Naive thymus-derived CD4-positive, alpha-beta T cell (primary cell): ENCODE measurements at regions of chr6 and their contacts with region 1.

Region 1: DNA sequence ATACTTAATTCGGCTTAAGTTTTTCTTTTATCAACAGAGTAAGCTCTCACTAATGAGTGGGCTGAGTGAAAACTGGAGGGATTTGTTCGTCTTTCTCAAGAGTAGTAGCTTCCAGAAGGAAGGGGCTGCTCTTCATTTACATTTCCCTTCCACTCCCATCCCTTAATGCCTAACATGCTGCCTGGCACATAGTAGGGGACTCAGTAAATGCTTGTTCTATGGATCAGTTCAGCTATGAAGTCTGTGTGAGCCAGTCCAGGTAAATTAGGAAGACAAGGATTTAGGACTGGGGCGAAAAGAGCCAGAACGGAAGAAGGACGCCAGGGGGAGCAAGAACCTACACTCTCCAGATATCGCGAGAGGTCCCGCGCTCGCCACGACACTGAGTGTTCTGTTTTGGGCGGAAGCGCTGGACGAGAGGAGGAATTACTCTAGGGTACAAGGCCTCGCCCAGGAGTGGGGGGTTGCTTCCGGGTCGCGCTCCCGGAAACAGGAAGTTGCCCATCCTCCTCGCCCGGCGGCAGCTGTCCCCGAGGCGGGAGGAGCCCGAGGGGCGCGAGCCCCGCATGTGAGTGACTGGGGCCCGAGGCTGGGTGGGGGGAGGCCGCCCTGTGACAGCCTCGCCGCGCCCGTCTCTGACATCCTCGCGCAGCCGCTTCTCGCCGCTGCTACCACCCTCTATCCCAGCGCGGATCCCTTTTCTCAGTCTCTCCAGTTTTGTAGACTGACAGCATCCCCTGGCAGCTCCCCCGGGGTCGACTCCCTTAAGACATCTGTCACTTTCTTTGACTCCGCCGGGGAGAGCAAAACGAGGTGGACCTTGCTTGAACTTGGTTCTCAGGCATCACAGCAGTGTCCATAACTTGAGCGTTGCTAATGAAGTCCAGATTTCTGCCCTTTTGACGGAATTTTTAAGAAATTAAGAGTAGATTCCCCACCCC is at the start of gene C6orf89:
- DNase-seq: peak; percentile 86 to 98 (median 95)
- ATAC-seq: peak; percentile 100
- H3K4me3 ChIP-seq: peak within 1 kb of the TSS; percentile 96
- H3K4me3 Mint-ChIP-seq: peak within 1 kb of the TSS; percentile 83 to 92 (median 90)
- H3K27ac ChIP-seq: peak within 1 kb of the TSS; percentile 81
- H3K27ac Mint-ChIP-seq: peak within 1 kb of the TSS; percentile 90 to 97 (median 95)
- H3K4me1 ChIP-seq: peaks cover 16 to 24% of the 10 kb centered on the region in 2 donors
- H3K4me1 Mint-ChIP-seq: peaks cover 25 to 47% (median 39%) of the 10 kb centered on the region in 7 donors
- H3K27me3 ChIP-seq: no peaks in the 10 kb centered on the region
- H3K27me3 Mint-ChIP-seq: no peaks in the 10 kb centered on the region
- total RNA-seq, gene C6orf89: 34.6 to 48.2 (median 47.7) TPM

Region 2: GRCh38 chr6:36333931-36334725 is 551.6 kb before region 1 on chr6:
- CTCF ChIA-PET with region 1: no interaction called
- POLR2A ChIA-PET with region 1: no interaction called
- intact Hi-C with region 1: no loop called
- DNase-seq: no peak
- ATAC-seq: no peak
- H3K4me3 ChIP-seq: no peak overlapping the region
- H3K4me3 Mint-ChIP-seq: no peak overlapping the region
- H3K27ac ChIP-seq: no peak overlapping the region
- H3K27ac Mint-ChIP-seq: no peak overlapping the region
- H3K4me1 ChIP-seq: peaks cover 0 to 4% of the 10 kb centered on the region in 2 donors
- H3K4me1 Mint-ChIP-seq: peaks cover 5 to 21% (median 7%) of the 10 kb centered on the region in 7 donors
- H3K27me3 ChIP-seq: peaks cover 0 to 3% of the 10 kb centered on the region in 2 donors
- H3K27me3 Mint-ChIP-seq: peaks cover 11 to 45% (median 25%) of the 10 kb centered on the region in 5 donors

Region 3: GRCh38 chr6:36912586-36912985 is 26.9 kb after region 1 on chr6:
- CTCF ChIA-PET with region 1: interaction called, 4 read pairs
- POLR2A ChIA-PET with region 1: interaction called, 5 read pairs
- intact Hi-C with region 1: loop called (anchors 1 kb)
- DNase-seq: peak in 8 of 9 donors; percentile 54 to 81 (median 72)
- ATAC-seq: peak; percentile 94
- H3K4me3 ChIP-seq: peak overlapping the region; percentile 32
- H3K4me3 Mint-ChIP-seq: peak overlapping the region; percentile 60 to 84 (median 74)
- H3K27ac ChIP-seq: peak overlapping the region; percentile 44
- H3K27ac Mint-ChIP-seq: peak overlapping the region; percentile 73 to 97 (median 92)
- H3K4me1 ChIP-seq: peaks cover 23% of the 10 kb centered on the region in 2 donors
- H3K4me1 Mint-ChIP-seq: peaks cover 18 to 69% (median 38%) of the 10 kb centered on the region in 7 donors
- H3K27me3 ChIP-seq: no peaks in the 10 kb centered on the region
- H3K27me3 Mint-ChIP-seq: no peaks in the 10 kb centered on the region

Region 4: GRCh38 chr6:36924131-36924530 is 38.4 kb after region 1 on chr6:
- CTCF ChIA-PET with region 1: no interaction called
- POLR2A ChIA-PET with region 1: no interaction called
- intact Hi-C with region 1: no loop called
- DNase-seq: no peak
- ATAC-seq: no peak
- H3K4me3 ChIP-seq: no peak overlapping the region
- H3K4me3 Mint-ChIP-seq: peak overlapping the region in 1 of 10 donors; percentile 44
- H3K27ac ChIP-seq: no peak overlapping the region
- H3K27ac Mint-ChIP-seq: peak overlapping the region in 5 of 9 donors; percentile 14 to 77 (median 45)
- H3K4me1 ChIP-seq: no peaks in the 10 kb centered on the region
- H3K4me1 Mint-ChIP-seq: peaks cover 0 to 31% (median 0%) of the 10 kb centered on the region in 7 donors
- H3K27me3 ChIP-seq: no peaks in the 10 kb centered on the region
- H3K27me3 Mint-ChIP-seq: no peaks in the 10 kb centered on the region

Region 5: GRCh38 chr6:36979347-36979742 is 93.6 kb after region 1 on chr6:
- CTCF ChIA-PET with region 1: interaction called, 6 read pairs
- POLR2A ChIA-PET with region 1: interaction called, 5 read pairs
- intact Hi-C with region 1: loop called (anchors 1 kb)
- DNase-seq: peak in 6 of 9 donors; percentile 36 to 62 (median 48)
- ATAC-seq: peak; percentile 70
- H3K4me3 ChIP-seq: no peak overlapping the region
- H3K4me3 Mint-ChIP-seq: peak overlapping the region in 2 of 10 donors; percentile 2 to 20
- H3K27ac ChIP-seq: no peak overlapping the region
- H3K27ac Mint-ChIP-seq: peak overlapping the region; percentile 44 to 88 (median 80)
- H3K4me1 ChIP-seq: peaks cover 13 to 20% of the 10 kb centered on the region in 2 donors
- H3K4me1 Mint-ChIP-seq: peaks cover 0 to 33% (median 27%) of the 10 kb centered on the region in 7 donors
- H3K27me3 ChIP-seq: no peaks in the 10 kb centered on the region
- H3K27me3 Mint-ChIP-seq: no peaks in the 10 kb centered on the region

Region 6: GRCh38 chr6:37207903-37208456 is 322.2 kb after region 1 on chr6:
- CTCF ChIA-PET with region 1: interaction called, 13 read pairs
- POLR2A ChIA-PET with region 1: interaction called, 5 read pairs
- intact Hi-C with region 1: loop called (anchors 1 kb)
- DNase-seq: peak; percentile 67 to 85 (median 82)
- ATAC-seq: peak; percentile 87
- H3K4me3 ChIP-seq: no peak overlapping the region
- H3K4me3 Mint-ChIP-seq: peak overlapping the region; percentile 4 to 77 (median 68)
- H3K27ac ChIP-seq: peak overlapping the region; percentile 23
- H3K27ac Mint-ChIP-seq: peak overlapping the region; percentile 72 to 98 (median 91)
- H3K4me1 ChIP-seq: peaks cover 36 to 39% of the 10 kb centered on the region in 2 donors
- H3K4me1 Mint-ChIP-seq: peaks cover 36 to 69% (median 64%) of the 10 kb centered on the region in 7 donors
- H3K27me3 ChIP-seq: no peaks in the 10 kb centered on the region
- H3K27me3 Mint-ChIP-seq: no peaks in the 10 kb centered on the region

Region 7: DNA sequence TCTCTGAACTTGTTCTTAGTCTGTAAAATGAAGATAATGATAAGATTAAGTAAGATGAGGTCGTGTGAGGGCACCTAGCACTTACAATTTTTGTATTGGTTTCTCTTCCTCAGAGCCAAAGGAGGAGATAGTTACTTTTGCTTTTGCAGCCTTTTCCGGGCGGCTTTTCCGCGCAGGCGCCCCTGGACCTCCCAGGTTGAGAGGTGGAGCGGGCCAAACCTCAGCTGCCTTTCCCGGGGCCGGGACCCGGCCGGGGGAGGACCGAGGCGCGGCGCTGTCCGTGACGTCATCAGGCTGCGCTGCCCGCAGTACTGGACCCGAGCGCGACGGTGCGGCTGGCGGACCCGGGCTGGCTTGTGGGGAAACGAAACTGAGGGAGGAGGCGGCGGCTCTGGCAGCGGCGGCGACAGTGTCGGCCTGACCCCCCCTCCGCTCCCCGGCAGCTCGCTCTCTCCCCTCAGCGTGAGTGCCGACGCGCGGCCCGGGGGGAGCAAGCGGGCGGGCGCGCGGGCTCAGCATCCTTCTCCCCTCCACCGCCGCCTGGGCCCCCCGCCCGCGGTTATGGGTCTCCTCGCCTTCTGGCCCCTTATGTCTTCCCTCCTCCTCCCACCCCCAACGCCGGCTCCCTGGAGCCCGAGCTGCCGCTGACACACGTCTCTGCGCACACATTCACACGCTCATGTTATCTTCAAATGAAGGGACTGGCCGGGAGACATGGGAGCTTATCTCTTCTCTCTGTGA is 547.4 kb after region 1 on chr6 and contains the start of gene CMTR1:
- CTCF ChIA-PET with region 1: no interaction called
- POLR2A ChIA-PET with region 1: no interaction called
- intact Hi-C with region 1: loop called in 1 of 2 experiments (anchors 1 kb)
- DNase-seq: peak; percentile 94 to 99 (median 95)
- ATAC-seq: peak; percentile 96
- H3K4me3 ChIP-seq: peak within 1 kb of the TSS; percentile 64
- H3K4me3 Mint-ChIP-seq: peak within 1 kb of the TSS; percentile 83 to 96 (median 94)
- H3K27ac ChIP-seq: peak within 1 kb of the TSS; percentile 94
- H3K27ac Mint-ChIP-seq: peak within 1 kb of the TSS; percentile 92 to 97 (median 96)
- H3K4me1 ChIP-seq: peaks cover 12 to 25% of the 10 kb centered on the region in 2 donors
- H3K4me1 Mint-ChIP-seq: peaks cover 24 to 55% (median 47%) of the 10 kb centered on the region in 7 donors
- H3K27me3 ChIP-seq: no peaks in the 10 kb centered on the region
- H3K27me3 Mint-ChIP-seq: peaks cover 2 to 9% (median 8%) of the 10 kb centered on the region in 5 donors
- total RNA-seq, gene CMTR1: 70.0 to 89.4 (median 71.8) TPM